ENCODE measurements at regions of chr3 and their contacts with region 1.

Region 1: GRCh38 chr3:141255846-141256261 is 24.2 kb downstream of the PXYLP1 start:
- DNase-seq: peak; percentile 63
- H3K4me3 Mint-ChIP-seq: no peak overlapping the region
- H3K27ac Mint-ChIP-seq: no peak overlapping the region
- H3K4me1 Mint-ChIP-seq: peaks cover 19% of the 10 kb centered on the region
- H3K27me3 Mint-ChIP-seq: no peaks in the 10 kb centered on the region

Region 2: GRCh38 chr3:141237701-141238521 is 17.9 kb before region 1 on chr3:
- CTCF ChIA-PET with region 1: interaction called, 67 read pairs
- DNase-seq: no peak
- H3K4me3 Mint-ChIP-seq: peak overlapping the region; percentile 10
- H3K27ac Mint-ChIP-seq: peak overlapping the region; percentile 80
- H3K4me1 Mint-ChIP-seq: peaks cover 76% of the 10 kb centered on the region
- H3K27me3 Mint-ChIP-seq: peaks cover 4% of the 10 kb centered on the region

Region 3: GRCh38 chr3:141243271-141243707 is 12.6 kb before region 1 on chr3:
- CTCF ChIA-PET with region 1: interaction called, 20 read pairs
- DNase-seq: peak; percentile 71
- H3K4me3 Mint-ChIP-seq: no peak overlapping the region
- H3K27ac Mint-ChIP-seq: peak overlapping the region; percentile 72
- H3K4me1 Mint-ChIP-seq: peaks cover 35% of the 10 kb centered on the region
- H3K27me3 Mint-ChIP-seq: no peaks in the 10 kb centered on the region

Region 4: DNA sequence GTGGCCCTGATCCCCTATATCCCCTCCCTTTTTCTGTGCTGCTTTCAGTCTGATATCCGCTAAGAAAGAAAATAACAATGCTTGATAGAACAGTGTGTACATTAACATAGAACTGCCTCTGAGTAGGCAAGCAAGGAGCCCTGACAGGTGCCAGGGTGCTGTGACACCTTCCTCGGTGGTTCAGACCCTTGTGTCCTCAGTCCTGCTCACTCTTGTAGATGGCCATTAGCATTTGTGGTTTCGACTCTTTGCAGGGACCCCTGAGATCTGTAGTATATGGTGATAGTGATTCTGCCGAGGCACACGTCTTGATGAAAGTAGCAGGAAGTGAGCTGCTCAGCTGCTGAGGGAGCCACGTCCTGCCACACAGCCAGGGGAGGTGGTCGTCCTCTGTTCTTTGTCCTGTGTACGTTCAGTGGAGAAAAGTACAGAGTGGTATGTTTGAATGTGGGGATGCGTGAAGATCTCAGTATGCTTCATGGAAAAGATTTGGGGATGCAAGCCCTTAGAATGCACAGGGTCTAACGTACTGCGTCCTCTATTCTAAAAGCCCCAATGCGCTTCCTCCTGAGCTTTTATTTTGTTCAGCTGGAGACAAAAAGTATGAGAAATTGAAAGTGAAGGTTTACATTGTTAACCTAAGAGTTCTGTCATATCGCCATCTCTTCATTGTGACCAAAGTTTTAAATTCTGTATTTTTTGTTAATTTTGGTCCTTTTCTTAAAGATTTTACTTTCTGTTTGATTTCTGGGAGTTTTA is 11.1 kb after region 1 on chr3:
- CTCF ChIA-PET with region 1: interaction called, 25 read pairs
- DNase-seq: peak; percentile 67
- H3K4me3 Mint-ChIP-seq: peak overlapping the region; percentile 72
- H3K27ac Mint-ChIP-seq: peak overlapping the region; percentile 96
- H3K4me1 Mint-ChIP-seq: peaks cover 42% of the 10 kb centered on the region
- H3K27me3 Mint-ChIP-seq: no peaks in the 10 kb centered on the region